ENCODE measurements at regions of chr12 and their contacts with region 1.

Region 1: DNA sequence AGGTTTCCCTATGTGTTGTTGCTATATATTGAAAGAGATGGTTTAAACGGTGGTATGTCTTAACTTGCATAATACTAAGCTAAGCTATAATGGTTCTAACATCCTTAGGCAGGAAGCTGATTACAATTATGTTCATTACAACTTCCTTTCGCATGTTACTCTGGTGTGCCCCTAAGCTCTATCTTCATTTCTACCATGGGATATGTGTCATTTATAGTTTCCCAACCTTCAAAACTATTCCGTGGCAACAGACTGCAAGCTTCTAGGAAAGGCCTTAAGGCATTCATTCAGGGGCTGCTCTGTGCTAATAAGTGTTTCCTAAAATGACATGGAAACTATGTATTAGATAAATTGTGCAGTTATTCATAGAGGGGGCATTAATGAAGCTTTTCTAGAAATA is 294.6 kb downstream of the GXYLT1 start:
- DNase-seq: no peak
- H3K4me3 ChIP-seq: no peak overlapping the region
- H3K4me3 Mint-ChIP-seq: no peak overlapping the region
- H3K27ac ChIP-seq: no peak overlapping the region
- H3K27ac Mint-ChIP-seq: no peak overlapping the region
- H3K4me1 ChIP-seq: no peaks in the 10 kb centered on the region
- H3K4me1 Mint-ChIP-seq: no peaks in the 10 kb centered on the region
- H3K27me3 ChIP-seq: no peaks in the 10 kb centered on the region
- H3K27me3 Mint-ChIP-seq: peaks cover 2 to 6% of the 10 kb centered on the region in 2 donors

Region 2: GRCh38 chr12:41367726-41368405 is 482.2 kb before region 1 on chr12:
- CTCF ChIA-PET with region 1: no interaction called
- POLR2A ChIA-PET with region 1: no interaction called
- intact Hi-C with region 1: no loop called
- DNase-seq: no peak
- H3K4me3 ChIP-seq: no peak overlapping the region
- H3K4me3 Mint-ChIP-seq: no peak overlapping the region
- H3K27ac ChIP-seq: no peak overlapping the region
- H3K27ac Mint-ChIP-seq: no peak overlapping the region
- H3K4me1 ChIP-seq: no peaks in the 10 kb centered on the region
- H3K4me1 Mint-ChIP-seq: no peaks in the 10 kb centered on the region
- H3K27me3 ChIP-seq: no peaks in the 10 kb centered on the region
- H3K27me3 Mint-ChIP-seq: peaks cover 0 to 3% of the 10 kb centered on the region in 2 donors

Region 3: GRCh38 chr12:41869432-41869831 is 19.4 kb after region 1 on chr12:
- CTCF ChIA-PET with region 1: no interaction called
- POLR2A ChIA-PET with region 1: no interaction called
- intact Hi-C with region 1: loop called (anchors 1 kb)
- DNase-seq: no peak
- H3K4me3 ChIP-seq: no peak overlapping the region
- H3K4me3 Mint-ChIP-seq: no peak overlapping the region
- H3K27ac ChIP-seq: no peak overlapping the region
- H3K27ac Mint-ChIP-seq: no peak overlapping the region
- H3K4me1 ChIP-seq: no peaks in the 10 kb centered on the region
- H3K4me1 Mint-ChIP-seq: no peaks in the 10 kb centered on the region
- H3K27me3 ChIP-seq: no peaks in the 10 kb centered on the region
- H3K27me3 Mint-ChIP-seq: peaks cover 2 to 6% of the 10 kb centered on the region in 2 donors

Region 4: GRCh38 chr12:42056130-42056529 is 206.1 kb after region 1 on chr12:
- CTCF ChIA-PET with region 1: no interaction called
- POLR2A ChIA-PET with region 1: no interaction called
- intact Hi-C with region 1: no loop called
- DNase-seq: no peak
- H3K4me3 ChIP-seq: no peak overlapping the region
- H3K4me3 Mint-ChIP-seq: no peak overlapping the region
- H3K27ac ChIP-seq: no peak overlapping the region
- H3K27ac Mint-ChIP-seq: no peak overlapping the region
- H3K4me1 ChIP-seq: no peaks in the 10 kb centered on the region
- H3K4me1 Mint-ChIP-seq: no peaks in the 10 kb centered on the region
- H3K27me3 ChIP-seq: no peaks in the 10 kb centered on the region
- H3K27me3 Mint-ChIP-seq: peaks cover 11 to 16% of the 10 kb centered on the region in 2 donors

Measured in CD4-positive, alpha-beta memory T cell (primary cell).